ENCODE measurements at regions of chr5 and their contacts with region 1.

Region 1: DNA sequence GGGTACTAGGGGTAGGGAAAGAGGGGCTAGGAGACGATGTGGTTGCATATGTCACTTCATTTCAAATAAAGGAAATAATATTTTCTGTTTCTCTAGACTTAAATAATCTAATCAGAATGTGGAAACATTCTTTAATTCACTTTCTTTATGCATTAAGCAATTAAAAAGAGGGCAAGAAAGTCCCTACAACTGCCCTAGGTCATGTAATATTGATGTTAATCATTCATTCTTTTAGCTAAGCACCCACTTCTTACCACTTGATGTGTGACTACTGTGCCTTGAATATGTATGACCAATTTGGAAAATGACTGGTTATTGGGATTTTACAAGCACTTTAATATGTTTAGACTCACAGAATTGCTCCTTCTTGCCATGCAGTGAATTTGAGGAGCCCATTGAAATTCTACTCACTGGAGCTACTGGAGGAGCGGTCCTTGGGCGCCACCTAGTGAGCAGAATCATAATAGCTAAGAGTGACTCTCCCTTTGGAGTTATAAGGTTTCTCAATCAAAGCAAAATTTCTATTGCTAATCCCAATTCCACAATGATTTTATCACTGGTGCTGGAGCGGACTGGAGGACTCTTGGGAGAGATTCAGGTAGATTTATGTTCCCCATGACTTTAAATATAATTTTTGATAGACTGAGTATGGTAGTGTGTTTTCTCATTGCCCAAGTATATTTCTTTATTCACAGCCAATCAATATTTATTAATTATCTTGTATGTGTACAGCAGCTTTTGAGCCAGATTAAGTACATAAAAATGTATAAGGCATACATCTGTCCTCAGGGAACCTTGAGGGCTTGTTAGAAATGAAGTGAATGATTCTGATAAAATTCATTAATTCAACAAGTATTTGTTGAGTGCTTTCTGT is 225.1 kb downstream of the ADGRV1 start:
- DNase-seq: peak; percentile 43
- ATAC-seq: peak; percentile 99
- H3K4me3 ChIP-seq: no peak overlapping the region
- H3K27ac ChIP-seq: no peak overlapping the region
- H3K4me1 ChIP-seq: no peaks in the 10 kb centered on the region
- H3K27me3 ChIP-seq: peaks cover 9% of the 10 kb centered on the region
- CTCF ChIP-seq: peak; percentile 92

Region 2: DNA sequence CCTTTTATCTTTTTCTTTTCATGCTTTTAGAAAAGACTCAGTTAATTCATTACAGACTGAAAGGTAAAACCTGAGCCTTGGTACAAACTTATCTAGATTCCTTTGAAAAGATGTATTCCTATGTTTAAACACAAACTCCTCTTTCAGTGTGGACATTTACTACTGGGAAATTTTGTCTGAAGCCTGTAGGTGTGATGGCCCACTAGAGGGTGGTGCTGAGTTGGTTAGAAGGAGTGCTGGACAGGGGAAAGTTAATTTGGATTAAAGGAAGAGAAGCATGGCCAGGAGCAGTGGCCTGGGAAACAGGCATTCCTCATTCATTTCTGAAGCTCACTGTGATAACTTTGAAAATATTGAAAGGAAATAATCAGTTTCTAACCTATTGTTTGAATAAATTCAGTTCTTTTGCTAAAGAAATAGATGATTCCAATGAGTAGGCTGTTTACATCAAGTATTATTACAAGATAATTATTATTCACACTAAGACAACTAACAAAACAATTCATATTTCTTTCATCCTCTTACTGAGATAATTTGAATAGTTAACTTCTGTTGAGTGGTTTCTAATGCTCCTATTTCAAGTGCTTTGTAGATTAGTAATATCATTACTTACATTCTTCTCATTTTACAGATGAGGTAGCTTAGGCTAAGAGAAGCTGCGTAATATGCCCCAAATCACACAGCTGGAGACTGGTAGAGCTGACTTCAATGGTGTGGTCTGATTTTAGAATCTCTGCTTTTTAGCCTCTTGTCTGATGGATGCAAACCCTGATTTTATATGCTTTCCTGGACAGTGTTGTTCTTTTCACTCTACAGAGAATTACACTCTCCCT is 74.2 kb before region 1 on chr5:
- CTCF ChIA-PET with region 1: interaction called, 10 read pairs
- POLR2A ChIA-PET with region 1: no interaction called
- in situ Hi-C with region 1: no loop called
- intact Hi-C with region 1: loop called (anchors 1 kb)
- DNase-seq: peak; percentile 22
- ATAC-seq: peak; percentile 91
- H3K4me3 ChIP-seq: no peak overlapping the region
- H3K27ac ChIP-seq: no peak overlapping the region
- H3K4me1 ChIP-seq: no peaks in the 10 kb centered on the region
- H3K27me3 ChIP-seq: peaks cover 16% of the 10 kb centered on the region
- CTCF ChIP-seq: peak; percentile 84

Region 3: GRCh38 chr5:90956511-90957097 is 172.9 kb after region 1 on chr5:
- CTCF ChIA-PET with region 1: no interaction called
- POLR2A ChIA-PET with region 1: no interaction called
- in situ Hi-C with region 1: no loop called
- intact Hi-C with region 1: no loop called
- DNase-seq: no peak
- ATAC-seq: no peak
- H3K4me3 ChIP-seq: no peak overlapping the region
- H3K27ac ChIP-seq: no peak overlapping the region
- H3K4me1 ChIP-seq: no peaks in the 10 kb centered on the region
- H3K27me3 ChIP-seq: peaks cover 2% of the 10 kb centered on the region
- CTCF ChIP-seq: no peak

Measured in Panc1 (cell line).